Right ventricle myocardium inferior (tissue), 1 donor: ENCODE measurements at regions of chr7 and their contacts with region 1.

Region 1: DNA sequence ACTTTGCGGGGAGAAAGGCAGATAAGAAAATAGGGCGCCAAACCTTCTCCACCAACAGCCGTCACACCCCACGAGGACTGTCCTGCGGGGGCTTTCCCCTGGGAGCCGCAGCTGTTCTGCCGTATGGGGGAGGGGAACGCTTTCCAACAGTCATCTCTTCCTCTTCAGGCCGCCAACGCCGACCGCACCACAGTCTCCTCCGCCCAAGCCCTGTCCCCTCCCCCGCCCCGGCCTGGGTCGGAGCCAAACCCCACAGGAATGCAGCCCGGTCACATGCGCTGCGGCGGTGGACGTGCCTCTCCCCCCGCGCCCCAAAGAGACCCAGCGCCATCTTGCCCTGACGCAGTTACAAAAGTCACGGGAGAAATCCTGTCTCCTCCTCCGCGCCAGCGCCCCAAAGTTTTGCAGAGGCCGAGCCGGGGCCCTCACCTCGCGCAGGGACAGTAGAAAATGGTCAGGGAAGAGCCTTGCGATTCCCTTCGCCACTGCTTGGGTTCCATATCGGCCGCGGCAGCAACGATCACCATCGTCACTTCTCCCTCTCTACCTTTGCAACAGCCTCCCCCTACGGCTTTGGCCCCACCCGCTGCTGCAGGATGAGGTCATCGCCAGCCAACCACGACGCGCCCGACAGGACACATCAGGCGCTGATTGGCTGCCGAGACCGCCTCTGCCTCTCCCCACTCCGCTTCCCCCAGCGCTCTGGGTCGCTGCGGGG is 1.3 kb upstream of the KMT2E start:
- DNase-seq: peak; percentile 100
- ATAC-seq: peak; percentile 92

Region 2: GRCh38 chr7:104943502-104944343 is 68.9 kb before region 1 on chr7:
- intact Hi-C with region 1: loop called (anchors 1 kb)
- DNase-seq: no peak
- ATAC-seq: peak; percentile 5

Region 3: DNA sequence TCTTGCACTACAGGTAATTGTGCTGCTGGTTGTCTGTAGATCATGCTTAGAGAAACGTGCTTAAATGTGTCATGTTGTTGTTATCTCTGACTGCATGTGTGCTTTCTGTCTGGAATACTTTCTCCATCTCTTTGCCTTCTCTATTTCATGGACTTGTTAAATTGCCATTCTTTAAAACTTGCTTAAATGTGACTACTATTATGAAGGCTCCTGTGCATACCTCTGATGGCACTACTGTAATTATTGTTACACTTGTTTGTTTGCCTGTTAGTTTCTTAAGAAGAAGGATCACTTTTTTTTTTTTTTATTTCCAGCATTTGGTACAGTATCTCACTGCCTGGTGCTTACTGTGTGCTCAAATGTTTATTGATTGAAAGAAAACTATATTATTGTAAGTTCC is 43.0 kb after region 1 on chr7:
- intact Hi-C with region 1: loop called (anchors 5 kb)
- DNase-seq: no peak
- ATAC-seq: no peak